Endothelial cell of umbilical vein (primary cell): ENCODE measurements at regions of chr1 and their contacts with region 1.

Region 1: DNA sequence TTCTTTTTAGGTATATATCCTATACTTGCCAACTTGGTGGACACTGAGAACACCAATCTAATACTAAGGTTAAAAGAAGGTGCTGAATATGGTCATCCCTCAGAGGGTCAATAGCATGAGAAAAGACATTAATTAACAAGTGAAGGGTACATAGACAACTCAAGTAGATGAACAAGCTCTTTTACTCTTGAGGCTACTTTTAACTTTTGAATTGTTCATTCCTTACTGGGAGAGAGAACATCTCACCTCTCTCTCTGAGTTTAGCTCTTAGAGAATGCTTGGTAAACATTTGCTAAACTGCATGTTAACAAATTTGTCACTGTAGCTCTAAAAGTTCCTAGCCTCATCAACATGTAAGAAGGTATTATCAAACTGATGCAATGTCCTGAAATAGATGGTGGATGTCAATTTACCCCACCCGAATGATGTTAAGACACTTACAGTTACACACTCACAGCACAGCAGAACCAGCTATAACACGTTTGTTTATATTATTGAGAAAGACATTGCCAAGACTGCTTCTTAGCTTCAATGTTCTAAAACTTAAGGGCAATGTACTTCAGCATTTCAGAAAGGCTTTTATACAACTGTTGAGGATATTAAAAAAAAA is 35.9 kb downstream of the HEATR1 start:
- DNase-seq: no peak
- H3K4me3 ChIP-seq: no peak overlapping the region
- H3K27ac ChIP-seq: no peak overlapping the region
- H3K4me1 ChIP-seq: no peaks in the 10 kb centered on the region
- H3K27me3 ChIP-seq: no peaks in the 10 kb centered on the region
- CTCF ChIP-seq: no peak
- POLR2A ChIP-seq: no peak

Region 2: DNA sequence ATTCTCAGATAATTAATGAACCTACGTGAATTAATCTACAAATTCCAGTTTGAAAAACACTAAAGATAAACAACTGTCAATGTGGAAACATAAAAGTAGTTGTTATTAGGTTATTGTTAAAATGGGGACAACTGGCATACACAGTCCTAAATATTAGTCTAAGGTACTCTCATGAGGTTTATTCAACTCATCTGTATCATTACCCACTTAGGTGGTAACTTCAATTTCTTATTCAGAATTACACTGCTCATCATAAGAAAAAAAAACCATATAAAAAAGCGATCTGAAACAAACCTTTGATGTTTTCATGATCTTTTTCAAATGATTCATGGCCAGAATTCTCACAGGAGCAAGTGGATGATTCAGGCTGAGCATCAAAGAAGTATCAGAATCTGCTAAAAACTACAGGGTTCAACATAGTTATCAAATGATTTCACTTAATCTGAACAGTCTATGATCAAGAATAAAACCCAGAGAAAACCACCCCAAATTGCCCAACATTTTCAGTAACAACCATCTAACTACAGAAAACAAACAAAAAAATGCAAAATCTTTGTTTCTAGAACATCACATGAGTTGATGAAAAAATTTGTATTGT is 22.3 kb after region 1 on chr1:
- CTCF ChIA-PET with region 1: no interaction called
- POLR2A ChIA-PET with region 1: no interaction called
- dilution Hi-C with region 1: no loop called
- intact Hi-C with region 1: loop called (anchors 2 kb)
- DNase-seq: no peak
- H3K4me3 ChIP-seq: no peak overlapping the region
- H3K27ac ChIP-seq: no peak overlapping the region
- H3K4me1 ChIP-seq: no peaks in the 10 kb centered on the region
- H3K27me3 ChIP-seq: no peaks in the 10 kb centered on the region
- CTCF ChIP-seq: no peak
- POLR2A ChIP-seq: no peak